B cell (primary cell): ENCODE measurements at regions of chr11 and their contacts with region 1.

Region 1: GRCh38 chr11:61899146-61899841 is 7.9 kb upstream of the FADS3 start:
- DNase-seq: peak; percentile 96
- ATAC-seq: peak; percentile 96
- H3K4me3 ChIP-seq: no peak overlapping the region
- H3K4me3 Mint-ChIP-seq: peak overlapping the region; percentile 41
- H3K27ac ChIP-seq: peak overlapping the region in 1 of 2 donors; percentile 33
- H3K27ac Mint-ChIP-seq: peak overlapping the region; percentile 85
- H3K4me1 ChIP-seq: peaks cover 21 to 31% of the 10 kb centered on the region in 2 donors
- H3K4me1 Mint-ChIP-seq: peaks cover 26% of the 10 kb centered on the region
- H3K27me3 ChIP-seq: peaks cover 0 to 3% (median 2%) of the 10 kb centered on the region in 4 experiments
- H3K27me3 Mint-ChIP-seq: peaks cover 4% of the 10 kb centered on the region
- CTCF ChIP-seq: peak; percentile 100

Region 2: DNA sequence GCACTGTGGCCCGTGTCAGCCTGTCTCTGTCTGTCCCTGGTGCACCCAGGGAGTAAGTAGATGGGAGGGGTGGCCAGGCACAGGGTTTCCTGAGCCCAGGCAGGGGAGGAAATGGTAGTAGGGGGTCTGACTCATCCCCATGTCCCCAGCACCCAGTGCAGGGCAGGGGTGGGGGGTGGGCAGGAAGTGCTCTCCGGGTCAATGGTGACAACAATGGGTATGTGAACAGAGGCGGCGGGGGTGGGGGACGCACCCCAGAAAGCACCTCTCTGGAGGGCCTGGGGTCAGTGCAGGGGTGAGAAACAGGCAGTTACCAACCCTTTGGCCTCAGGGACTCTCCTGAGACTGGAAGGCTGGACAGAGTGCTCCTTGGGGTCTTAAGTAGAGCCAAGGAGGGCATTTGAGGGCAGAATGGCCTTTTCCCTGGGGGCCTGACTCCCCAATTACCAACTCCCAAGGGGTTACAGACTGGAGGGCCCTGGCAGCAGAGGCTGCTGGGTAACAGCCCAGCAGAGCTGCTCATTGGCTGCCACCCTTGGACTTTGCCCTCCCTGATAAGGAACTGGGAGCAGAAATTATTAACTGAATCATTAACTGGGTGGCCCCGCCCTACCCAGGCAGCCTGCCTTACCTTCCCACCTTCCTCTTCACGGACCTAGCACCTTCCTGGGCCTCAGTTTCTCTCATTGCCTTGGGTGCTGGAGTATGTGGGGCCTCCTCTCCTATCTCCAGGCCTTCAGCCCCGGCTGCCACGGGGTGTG is 142.7 kb before region 1 on chr11:
- CTCF ChIA-PET with region 1: no interaction called
- POLR2A ChIA-PET with region 1: no interaction called
- intact Hi-C with region 1: no loop called
- DNase-seq: no peak
- ATAC-seq: peak; percentile 29
- H3K4me3 ChIP-seq: no peak overlapping the region
- H3K4me3 Mint-ChIP-seq: no peak overlapping the region
- H3K27ac ChIP-seq: no peak overlapping the region
- H3K27ac Mint-ChIP-seq: no peak overlapping the region
- H3K4me1 ChIP-seq: peaks cover 12 to 16% of the 10 kb centered on the region in 2 donors
- H3K4me1 Mint-ChIP-seq: peaks cover 14% of the 10 kb centered on the region
- H3K27me3 ChIP-seq: peaks cover 0 to 19% (median 11%) of the 10 kb centered on the region in 4 experiments
- H3K27me3 Mint-ChIP-seq: peaks cover 19% of the 10 kb centered on the region
- CTCF ChIP-seq: no peak

Region 3: GRCh38 chr11:61816736-61817455 is 82.4 kb before region 1 on chr11 and contains the start of gene FADS1:
- CTCF ChIA-PET with region 1: interaction called, 18 read pairs
- POLR2A ChIA-PET with region 1: no interaction called
- intact Hi-C with region 1: loop called (anchors 5 kb)
- DNase-seq: peak; percentile 83
- ATAC-seq: peak; percentile 65
- H3K4me3 ChIP-seq: peak within 1 kb of the TSS; percentile 56 to 77 (median 70)
- H3K4me3 Mint-ChIP-seq: peak within 1 kb of the TSS; percentile 96
- H3K27ac ChIP-seq: no peak within 1 kb of the TSS
- H3K27ac Mint-ChIP-seq: peak within 1 kb of the TSS; percentile 83
- H3K4me1 ChIP-seq: peaks cover 9 to 24% of the 10 kb centered on the region in 2 donors
- H3K4me1 Mint-ChIP-seq: peaks cover 15% of the 10 kb centered on the region
- H3K27me3 ChIP-seq: peaks cover 0 to 17% (median 4%) of the 10 kb centered on the region in 4 experiments
- H3K27me3 Mint-ChIP-seq: no peaks in the 10 kb centered on the region
- CTCF ChIP-seq: peak; percentile 53
- total RNA-seq, gene FADS1: 14.8 and 15.6 TPM in 2 replicates

Region 4: GRCh38 chr11:61855939-61856680 is 43.2 kb before region 1 on chr11:
- CTCF ChIA-PET with region 1: no interaction called
- POLR2A ChIA-PET with region 1: no interaction called
- intact Hi-C with region 1: no loop called
- DNase-seq: no peak
- ATAC-seq: no peak
- H3K4me3 ChIP-seq: no peak overlapping the region
- H3K4me3 Mint-ChIP-seq: no peak overlapping the region
- H3K27ac ChIP-seq: no peak overlapping the region
- H3K27ac Mint-ChIP-seq: no peak overlapping the region
- H3K4me1 ChIP-seq: no peaks in the 10 kb centered on the region
- H3K4me1 Mint-ChIP-seq: no peaks in the 10 kb centered on the region
- H3K27me3 ChIP-seq: no peaks in the 10 kb centered on the region
- H3K27me3 Mint-ChIP-seq: no peaks in the 10 kb centered on the region
- CTCF ChIP-seq: no peak

Region 5: GRCh38 chr11:61879711-61880430 is 19.4 kb before region 1 on chr11:
- CTCF ChIA-PET with region 1: interaction called, 144 read pairs
- POLR2A ChIA-PET with region 1: interaction called, 9 read pairs
- intact Hi-C with region 1: loop called (anchors 1 kb)
- DNase-seq: peak; percentile 64
- ATAC-seq: peak; percentile 67
- H3K4me3 ChIP-seq: peak overlapping the region; percentile 2 to 63 (median 39)
- H3K4me3 Mint-ChIP-seq: peak overlapping the region; percentile 95
- H3K27ac ChIP-seq: peak overlapping the region; percentile 67 to 84
- H3K27ac Mint-ChIP-seq: peak overlapping the region; percentile 95
- H3K4me1 ChIP-seq: peaks cover 29 to 53% of the 10 kb centered on the region in 2 donors
- H3K4me1 Mint-ChIP-seq: peaks cover 54% of the 10 kb centered on the region
- H3K27me3 ChIP-seq: no peaks in the 10 kb centered on the region
- H3K27me3 Mint-ChIP-seq: no peaks in the 10 kb centered on the region
- CTCF ChIP-seq: no peak

Region 6: GRCh38 chr11:61935861-61936260 is 36.6 kb after region 1 on chr11:
- CTCF ChIA-PET with region 1: interaction called, 14 read pairs
- POLR2A ChIA-PET with region 1: no interaction called
- intact Hi-C with region 1: no loop called
- DNase-seq: no peak
- ATAC-seq: no peak
- H3K4me3 ChIP-seq: no peak overlapping the region
- H3K4me3 Mint-ChIP-seq: no peak overlapping the region
- H3K27ac ChIP-seq: no peak overlapping the region
- H3K27ac Mint-ChIP-seq: no peak overlapping the region
- H3K4me1 ChIP-seq: no peaks in the 10 kb centered on the region
- H3K4me1 Mint-ChIP-seq: no peaks in the 10 kb centered on the region
- H3K27me3 ChIP-seq: peaks cover 0 to 13% (median 5%) of the 10 kb centered on the region in 4 experiments
- H3K27me3 Mint-ChIP-seq: peaks cover 40% of the 10 kb centered on the region
- CTCF ChIP-seq: no peak

Region 7: DNA sequence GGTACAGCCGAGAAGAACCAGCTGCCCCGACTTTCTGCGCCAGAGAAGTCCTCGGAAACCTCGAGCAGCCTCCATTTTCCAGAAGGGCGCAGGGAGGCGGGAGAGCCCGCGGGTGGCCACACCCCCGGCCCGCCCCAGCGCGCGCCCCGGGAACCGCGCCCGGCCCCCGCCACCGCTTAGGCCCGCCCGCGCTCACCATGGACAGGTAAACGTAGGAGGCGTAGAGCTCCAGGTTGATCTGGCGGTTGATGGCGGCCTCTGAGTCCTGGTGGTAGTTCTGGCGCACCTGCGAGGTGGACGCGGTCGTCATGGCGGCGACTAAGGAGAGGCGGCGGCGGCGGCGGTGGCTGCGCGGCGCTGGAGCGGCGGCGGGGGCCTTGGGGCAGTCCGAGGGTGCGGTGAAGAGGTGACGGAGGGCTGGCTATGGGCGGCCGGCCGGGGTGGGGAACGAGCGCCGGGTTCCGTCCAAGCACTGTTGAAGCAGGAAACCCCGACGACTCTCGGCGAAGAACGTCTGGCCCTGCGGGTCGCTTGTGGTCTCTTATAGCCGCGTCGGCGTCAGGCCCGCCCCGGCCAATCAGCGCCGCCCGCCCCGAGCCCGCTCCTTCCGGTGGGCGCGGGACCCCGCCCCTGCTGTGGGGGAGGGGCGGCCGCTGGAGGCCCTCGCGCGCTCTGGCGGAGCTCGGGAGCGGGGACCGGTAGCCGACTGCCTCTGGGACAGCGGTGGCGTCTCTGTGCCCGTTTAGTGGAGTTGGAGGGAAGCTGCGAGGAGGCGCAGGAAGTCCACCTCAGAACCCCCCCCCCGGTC is 68.0 kb after region 1 on chr11 and contains the start of gene FTH1:
- CTCF ChIA-PET with region 1: interaction called, 59 read pairs
- POLR2A ChIA-PET with region 1: interaction called, 12 read pairs
- intact Hi-C with region 1: no loop called
- DNase-seq: peak; percentile 95
- ATAC-seq: peak; percentile 67
- H3K4me3 ChIP-seq: peak within 1 kb of the TSS; percentile 88 to 99 (median 96)
- H3K4me3 Mint-ChIP-seq: peak within 1 kb of the TSS; percentile 97
- H3K27ac ChIP-seq: peak within 1 kb of the TSS; percentile 86 to 94
- H3K27ac Mint-ChIP-seq: peak within 1 kb of the TSS; percentile 99
- H3K4me1 ChIP-seq: peaks cover 58 to 67% of the 10 kb centered on the region in 2 donors
- H3K4me1 Mint-ChIP-seq: peaks cover 72% of the 10 kb centered on the region
- H3K27me3 ChIP-seq: no peaks in the 10 kb centered on the region
- H3K27me3 Mint-ChIP-seq: no peaks in the 10 kb centered on the region
- CTCF ChIP-seq: no peak
- total RNA-seq, gene FTH1: 1,265 and 1,314 TPM in 2 replicates